Activated T-helper 2 cell treated with anti-CD3 and anti-CD28 coated beads, Interferon-gamma antibody, Interleukin-2, Interleukin-4, amounts not matched to agents 10 μg/mL and 5 μg/mL and 100 μg/mL, durations not matched to agents 14 hours and 24 hours and 36 hours (primary cell): ENCODE measurements at regions of chr14 and their contacts with region 1.

Region 1: GRCh38 chr14:55458800-55459515 is 18.5 kb upstream of the TBPL2 start:
- DNase-seq: no peak
- H3K4me3 Mint-ChIP-seq: no peak overlapping the region
- H3K27ac Mint-ChIP-seq: peak overlapping the region; percentile 31
- H3K4me1 Mint-ChIP-seq: peaks cover 22% of the 10 kb centered on the region
- H3K27me3 Mint-ChIP-seq: peaks cover 18% of the 10 kb centered on the region

Region 2: GRCh38 chr14:55191203-55192053 is 267.5 kb before region 1 on chr14 and contains the start of gene DLGAP5:
- intact Hi-C with region 1: loop called (anchors 1 kb)
- DNase-seq: peak; percentile 93
- H3K4me3 Mint-ChIP-seq: peak within 1 kb of the TSS; percentile 95
- H3K27ac Mint-ChIP-seq: peak within 1 kb of the TSS; percentile 88
- H3K4me1 Mint-ChIP-seq: peaks cover 35% of the 10 kb centered on the region
- H3K27me3 Mint-ChIP-seq: peaks cover 4% of the 10 kb centered on the region
- total RNA-seq, gene DLGAP5: 41.9 and 46.0 TPM in 2 replicates

Region 3: GRCh38 chr14:55446218-55446654 is 12.7 kb before region 1 on chr14:
- intact Hi-C with region 1: loop called (anchors 1 kb)
- DNase-seq: peak; percentile 22
- H3K4me3 Mint-ChIP-seq: no peak overlapping the region
- H3K27ac Mint-ChIP-seq: no peak overlapping the region
- H3K4me1 Mint-ChIP-seq: peaks cover 23% of the 10 kb centered on the region
- H3K27me3 Mint-ChIP-seq: no peaks in the 10 kb centered on the region

Region 4: GRCh38 chr14:55654243-55654642 is 195.3 kb after region 1 on chr14:
- intact Hi-C with region 1: loop called (anchors 5 kb)
- DNase-seq: no peak
- H3K4me3 Mint-ChIP-seq: no peak overlapping the region
- H3K27ac Mint-ChIP-seq: no peak overlapping the region
- H3K4me1 Mint-ChIP-seq: peaks cover 19% of the 10 kb centered on the region
- H3K27me3 Mint-ChIP-seq: no peaks in the 10 kb centered on the region

Region 5: GRCh38 chr14:57268161-57269069 is 1809.5 kb after region 1 on chr14 and contains the starts of genes AP5M1 and EXOC5:
- intact Hi-C with region 1: loop called (anchors 5 kb)
- DNase-seq: peak; percentile 91
- H3K4me3 Mint-ChIP-seq: peak within 1 kb of the TSS; percentile 100
- H3K27ac Mint-ChIP-seq: peak within 1 kb of the TSS; percentile 100
- H3K4me1 Mint-ChIP-seq: peaks cover 51% of the 10 kb centered on the region
- H3K27me3 Mint-ChIP-seq: no peaks in the 10 kb centered on the region
- total RNA-seq, gene AP5M1: 43.9 and 49.7 TPM in 2 replicates
- total RNA-seq, gene EXOC5: 79.7 and 81.5 TPM in 2 replicates